ENCODE measurements at regions of chr3 and their contacts with region 1.

Region 1: DNA sequence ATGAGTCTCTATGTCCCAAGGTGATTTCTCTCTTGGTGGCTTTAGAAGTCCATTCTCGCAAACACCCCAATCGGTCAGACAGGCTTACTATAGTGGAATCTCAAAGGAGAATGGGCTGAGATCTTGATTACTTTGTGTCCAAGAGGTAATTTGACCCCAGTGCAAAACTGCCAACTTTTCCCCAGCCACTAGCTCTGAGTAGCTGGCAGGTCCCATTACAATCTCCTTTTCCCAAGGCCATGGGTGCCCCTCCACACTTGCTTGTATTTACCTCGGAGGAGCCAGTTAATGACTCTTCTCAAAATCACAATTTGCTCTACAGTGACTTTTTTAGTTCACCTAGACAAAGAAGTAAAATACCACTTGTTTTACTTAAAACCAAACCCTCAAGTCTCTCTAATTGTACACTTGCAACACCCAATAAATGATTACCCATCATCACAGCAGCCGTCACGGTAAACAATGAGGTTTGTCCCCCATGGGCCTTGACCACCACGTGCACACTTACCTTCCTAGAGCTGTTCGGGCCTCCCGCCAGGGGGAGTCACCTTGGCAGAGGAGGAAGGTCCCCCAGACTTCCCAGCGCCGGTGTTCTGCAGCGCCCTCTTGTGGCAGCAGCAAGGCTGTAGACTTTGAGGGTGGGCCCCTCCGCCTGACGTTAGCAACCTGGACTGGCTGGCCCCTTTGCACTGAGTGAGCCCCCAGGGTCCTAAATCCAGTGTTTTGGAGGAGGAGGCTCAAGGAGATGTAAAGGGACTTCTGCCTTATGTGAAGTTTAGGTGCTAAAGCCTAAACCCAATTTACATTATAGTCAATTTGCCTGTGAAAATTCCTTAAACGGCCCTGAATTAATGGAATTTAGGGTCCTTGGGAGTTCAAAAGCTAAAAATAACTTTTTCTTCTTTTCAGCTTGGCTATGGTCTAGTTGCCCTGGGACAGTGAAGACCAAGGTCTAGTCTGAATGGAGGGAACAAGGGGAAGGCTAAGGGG is 18.6 kb upstream of the HDAC11 start:
- DNase-seq: peak; percentile 37 to 80
- H3K4me3 ChIP-seq: no peak overlapping the region
- H3K27ac ChIP-seq: no peak overlapping the region
- H3K4me1 ChIP-seq: no peaks in the 10 kb centered on the region
- H3K27me3 ChIP-seq: peaks cover 0 to 16% (median 0%) of the 10 kb centered on the region in 3 donors
- CTCF ChIP-seq: peak in 4 of 7 experiments; percentile 7 to 38 (median 27)
- EP300 ChIP-seq: no peak
- POLR2A ChIP-seq: no peak

Region 2: GRCh38 chr3:13091898-13092611 is 369.4 kb before region 1 on chr3:
- intact Hi-C with region 1: loop called (anchors 10 kb)
- DNase-seq: peak; percentile 92
- H3K4me3 ChIP-seq: no peak overlapping the region
- H3K27ac ChIP-seq: no peak overlapping the region
- H3K4me1 ChIP-seq: peaks cover 0 to 13% (median 11%) of the 10 kb centered on the region in 4 donors
- H3K27me3 ChIP-seq: peaks cover 0 to 4% (median 0%) of the 10 kb centered on the region in 3 donors
- CTCF ChIP-seq: peak in 5 of 7 experiments; percentile 89 to 99 (median 95)
- EP300 ChIP-seq: no peak
- POLR2A ChIP-seq: no peak

Region 3: DNA sequence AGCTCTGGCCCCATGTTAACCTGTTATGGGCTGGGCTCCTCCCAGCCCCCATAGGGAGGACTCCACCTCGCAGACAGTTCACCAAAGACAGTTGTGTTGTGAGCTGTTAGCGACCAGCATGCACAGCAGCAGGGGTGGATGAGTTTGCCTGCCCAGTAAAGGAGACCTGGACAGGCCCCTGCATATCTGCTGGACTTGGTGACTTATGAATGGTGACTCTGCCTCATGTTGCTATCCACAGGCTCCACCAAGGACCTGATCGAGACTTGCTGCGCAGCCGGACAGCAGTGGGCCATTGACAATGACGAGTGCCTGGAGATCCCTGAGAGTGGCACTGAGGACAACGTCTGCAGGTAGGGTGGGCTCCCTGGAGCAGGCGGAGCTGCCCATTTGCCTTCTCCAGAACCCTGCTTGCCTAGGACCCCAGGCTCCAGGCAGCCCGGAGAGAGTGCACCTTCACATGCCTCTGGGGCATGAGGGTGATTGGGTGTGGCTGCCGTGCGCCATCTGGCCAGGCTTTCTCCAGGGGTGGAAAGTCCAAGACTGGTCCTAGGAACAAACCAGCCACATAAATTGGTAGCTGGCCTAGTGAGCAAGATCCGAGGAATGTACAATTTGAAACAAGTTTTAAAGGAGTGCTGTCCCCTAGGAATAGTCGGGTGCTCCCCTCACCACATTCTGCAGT is 146.5 kb after region 1 on chr3:
- intact Hi-C with region 1: no loop called
- DNase-seq: no peak
- H3K4me3 ChIP-seq: no peak overlapping the region
- H3K27ac ChIP-seq: no peak overlapping the region
- H3K4me1 ChIP-seq: no peaks in the 10 kb centered on the region
- H3K27me3 ChIP-seq: peaks cover 0 to 14% (median 0%) of the 10 kb centered on the region in 3 donors
- CTCF ChIP-seq: no peak
- EP300 ChIP-seq: no peak
- POLR2A ChIP-seq: no peak

Region 4: GRCh38 chr3:13770170-13771169 is 309.0 kb after region 1 on chr3:
- intact Hi-C with region 1: no loop called
- DNase-seq: peak; percentile 19 to 47
- H3K4me3 ChIP-seq: no peak overlapping the region
- H3K27ac ChIP-seq: no peak overlapping the region
- H3K4me1 ChIP-seq: no peaks in the 10 kb centered on the region
- H3K27me3 ChIP-seq: peaks cover 0 to 23% (median 3%) of the 10 kb centered on the region in 3 donors
- CTCF ChIP-seq: no peak
- EP300 ChIP-seq: no peak
- POLR2A ChIP-seq: no peak

Measured in stomach (tissue), 19 donors.